Naive thymus-derived CD4-positive, alpha-beta T cell (primary cell): ENCODE measurements at regions of chr4 and their contacts with region 1.

Region 1: GRCh38 chr4:185203486-185204237 is at the start of gene CFAP97:
- DNase-seq: peak; percentile 78 to 90 (median 85)
- ATAC-seq: peak; percentile 89
- H3K4me3 ChIP-seq: peak within 1 kb of the TSS; percentile 64
- H3K4me3 Mint-ChIP-seq: peak within 1 kb of the TSS; percentile 87 to 99 (median 96)
- H3K27ac ChIP-seq: peak within 1 kb of the TSS; percentile 75
- H3K27ac Mint-ChIP-seq: peak within 1 kb of the TSS; percentile 95 to 99 (median 98)
- H3K4me1 ChIP-seq: peaks cover 22% of the 10 kb centered on the region in 2 donors
- H3K4me1 Mint-ChIP-seq: peaks cover 28 to 60% (median 53%) of the 10 kb centered on the region in 7 donors
- H3K27me3 ChIP-seq: no peaks in the 10 kb centered on the region
- H3K27me3 Mint-ChIP-seq: peaks cover 0 to 3% (median 0%) of the 10 kb centered on the region in 5 donors
- total RNA-seq, gene CFAP97: 23.6 to 46.5 (median 38.0) TPM

Region 2: DNA sequence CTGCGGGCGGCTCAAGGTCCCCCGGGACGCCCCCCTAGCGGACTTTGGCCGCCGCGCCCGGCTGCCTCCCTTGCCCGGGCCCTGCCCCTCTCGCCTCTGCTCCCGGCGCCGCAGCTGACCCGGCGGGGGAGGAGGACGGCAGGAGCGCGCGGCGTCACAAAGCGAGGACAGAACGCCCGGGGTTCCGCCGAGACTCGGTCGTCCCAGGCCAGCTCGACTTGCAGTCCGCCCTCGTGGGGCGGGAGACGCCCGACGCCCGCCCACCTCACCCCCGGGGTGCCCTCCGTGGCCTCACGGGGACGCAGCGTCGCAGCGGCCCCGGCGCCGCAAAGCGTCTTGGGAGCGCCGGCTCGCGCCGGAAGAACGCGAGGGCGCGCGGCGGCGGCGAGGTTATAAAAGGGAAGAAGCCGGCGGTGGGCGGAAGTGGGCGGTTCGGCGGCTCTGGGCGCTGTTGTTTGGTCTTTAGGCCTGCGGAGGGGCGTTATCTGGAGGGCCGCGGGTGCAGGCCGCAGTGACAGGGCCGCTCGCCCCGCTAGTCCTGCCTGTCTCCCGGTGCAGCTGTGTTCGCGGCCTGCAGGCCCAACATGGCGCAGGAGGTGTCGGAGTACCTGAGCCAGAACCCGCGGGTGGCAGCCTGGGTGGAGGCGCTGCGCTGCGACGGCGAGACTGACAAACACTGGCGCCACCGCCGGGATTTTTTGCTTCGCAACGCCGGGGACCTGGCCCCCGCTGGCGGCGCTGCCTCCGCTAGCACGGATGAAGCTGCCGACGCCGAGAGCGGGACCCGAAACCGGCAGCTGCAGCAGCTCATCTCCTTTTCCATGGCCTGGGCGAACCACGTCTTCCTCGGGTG is 1759.2 kb before region 1 on chr4 and contains the start of gene CDKN2AIP:
- CTCF ChIA-PET with region 1: no interaction called
- POLR2A ChIA-PET with region 1: interaction called, 3 read pairs
- intact Hi-C with region 1: loop called in 1 of 2 experiments (anchors 2 kb)
- DNase-seq: peak; percentile 92 to 97 (median 95)
- ATAC-seq: peak; percentile 93
- H3K4me3 ChIP-seq: peak within 1 kb of the TSS; percentile 81
- H3K4me3 Mint-ChIP-seq: peak within 1 kb of the TSS; percentile 94 to 99 (median 97)
- H3K27ac ChIP-seq: peak within 1 kb of the TSS; percentile 96
- H3K27ac Mint-ChIP-seq: peak within 1 kb of the TSS; percentile 97 to 98 (median 98)
- H3K4me1 ChIP-seq: peaks cover 30 to 33% of the 10 kb centered on the region in 2 donors
- H3K4me1 Mint-ChIP-seq: peaks cover 35 to 66% (median 51%) of the 10 kb centered on the region in 7 donors
- H3K27me3 ChIP-seq: no peaks in the 10 kb centered on the region
- H3K27me3 Mint-ChIP-seq: peaks cover 0 to 5% (median 0%) of the 10 kb centered on the region in 5 donors
- total RNA-seq, gene CDKN2AIP: 24.9 to 58.2 (median 44.4) TPM

Region 3: GRCh38 chr4:184825896-184826690 is 377.6 kb before region 1 on chr4 and contains the start of gene ACSL1:
- CTCF ChIA-PET with region 1: no interaction called
- POLR2A ChIA-PET with region 1: no interaction called
- intact Hi-C with region 1: loop called (anchors 2 to 5 kb)
- DNase-seq: peak; percentile 63 to 83 (median 75)
- ATAC-seq: peak; percentile 95
- H3K4me3 ChIP-seq: peak within 1 kb of the TSS; percentile 59
- H3K4me3 Mint-ChIP-seq: peak within 1 kb of the TSS; percentile 89 to 94 (median 91)
- H3K27ac ChIP-seq: peak within 1 kb of the TSS; percentile 73
- H3K27ac Mint-ChIP-seq: peak within 1 kb of the TSS; percentile 79 to 91 (median 90)
- H3K4me1 ChIP-seq: peaks cover 4 to 7% of the 10 kb centered on the region in 2 donors
- H3K4me1 Mint-ChIP-seq: peaks cover 21 to 46% (median 33%) of the 10 kb centered on the region in 7 donors
- H3K27me3 ChIP-seq: no peaks in the 10 kb centered on the region
- H3K27me3 Mint-ChIP-seq: peaks cover 0 to 25% (median 0%) of the 10 kb centered on the region in 5 donors
- total RNA-seq, gene ACSL1: 9.5 to 80.1 (median 20.4) TPM

Region 4: GRCh38 chr4:185151296-185151695 is 52.4 kb before region 1 on chr4:
- CTCF ChIA-PET with region 1: no interaction called
- POLR2A ChIA-PET with region 1: no interaction called
- intact Hi-C with region 1: no loop called
- DNase-seq: no peak
- ATAC-seq: no peak
- H3K4me3 ChIP-seq: no peak overlapping the region
- H3K4me3 Mint-ChIP-seq: no peak overlapping the region
- H3K27ac ChIP-seq: no peak overlapping the region
- H3K27ac Mint-ChIP-seq: no peak overlapping the region
- H3K4me1 ChIP-seq: peaks cover 0 to 4% of the 10 kb centered on the region in 2 donors
- H3K4me1 Mint-ChIP-seq: peaks cover 0 to 8% (median 0%) of the 10 kb centered on the region in 7 donors
- H3K27me3 ChIP-seq: no peaks in the 10 kb centered on the region
- H3K27me3 Mint-ChIP-seq: peaks cover 0 to 6% (median 0%) of the 10 kb centered on the region in 5 donors

Region 5: DNA sequence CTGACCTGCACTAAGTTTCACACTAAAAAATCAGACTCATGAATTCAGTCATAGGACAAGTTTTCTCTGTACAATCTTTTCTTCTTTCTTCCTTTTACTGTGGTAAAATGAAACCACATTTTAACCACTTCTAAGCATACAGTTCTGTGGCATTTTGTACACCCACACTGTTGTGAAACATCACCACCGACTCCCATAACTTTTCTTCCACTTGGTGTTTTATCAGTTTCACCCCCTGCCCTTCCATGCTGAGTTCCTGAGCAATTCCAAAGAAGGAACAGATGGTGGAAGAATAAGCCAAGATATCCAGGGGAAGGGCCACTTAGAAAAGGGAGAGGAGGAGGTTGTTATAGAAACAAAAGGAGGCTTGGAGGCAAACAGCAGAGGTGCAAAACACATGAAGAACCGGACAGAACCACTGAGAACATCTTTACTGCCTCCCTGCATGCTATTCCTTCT is 38.0 kb before region 1 on chr4:
- CTCF ChIA-PET with region 1: no interaction called
- POLR2A ChIA-PET with region 1: interaction called, 3 read pairs
- intact Hi-C with region 1: loop called (anchors 2 to 5 kb)
- DNase-seq: peak in 7 of 9 donors; percentile 29 to 77 (median 71)
- ATAC-seq: peak; percentile 81
- H3K4me3 ChIP-seq: peak overlapping the region; percentile 0
- H3K4me3 Mint-ChIP-seq: peak overlapping the region; percentile 40 to 79 (median 66)
- H3K27ac ChIP-seq: no peak overlapping the region
- H3K27ac Mint-ChIP-seq: peak overlapping the region in 7 of 9 donors; percentile 21 to 82 (median 48)
- H3K4me1 ChIP-seq: peaks cover 14% of the 10 kb centered on the region in 2 donors
- H3K4me1 Mint-ChIP-seq: peaks cover 13 to 26% (median 20%) of the 10 kb centered on the region in 7 donors
- H3K27me3 ChIP-seq: no peaks in the 10 kb centered on the region
- H3K27me3 Mint-ChIP-seq: peaks cover 0 to 18% (median 0%) of the 10 kb centered on the region in 5 donors

Region 6: GRCh38 chr4:185256446-185256845 is 52.8 kb after region 1 on chr4:
- CTCF ChIA-PET with region 1: no interaction called
- POLR2A ChIA-PET with region 1: interaction called, 7 read pairs
- intact Hi-C with region 1: loop called in 1 of 2 experiments (anchors 1 kb)
- DNase-seq: no peak
- ATAC-seq: no peak
- H3K4me3 ChIP-seq: peak overlapping the region; percentile 39
- H3K4me3 Mint-ChIP-seq: peak overlapping the region in 6 of 10 donors; percentile 36 to 83 (median 78)
- H3K27ac ChIP-seq: peak overlapping the region; percentile 2
- H3K27ac Mint-ChIP-seq: peak overlapping the region in 5 of 9 donors; percentile 83 to 92 (median 87)
- H3K4me1 ChIP-seq: peaks cover 22 to 23% of the 10 kb centered on the region in 2 donors
- H3K4me1 Mint-ChIP-seq: peaks cover 10 to 70% (median 43%) of the 10 kb centered on the region in 7 donors
- H3K27me3 ChIP-seq: no peaks in the 10 kb centered on the region
- H3K27me3 Mint-ChIP-seq: no peaks in the 10 kb centered on the region

Region 7: DNA sequence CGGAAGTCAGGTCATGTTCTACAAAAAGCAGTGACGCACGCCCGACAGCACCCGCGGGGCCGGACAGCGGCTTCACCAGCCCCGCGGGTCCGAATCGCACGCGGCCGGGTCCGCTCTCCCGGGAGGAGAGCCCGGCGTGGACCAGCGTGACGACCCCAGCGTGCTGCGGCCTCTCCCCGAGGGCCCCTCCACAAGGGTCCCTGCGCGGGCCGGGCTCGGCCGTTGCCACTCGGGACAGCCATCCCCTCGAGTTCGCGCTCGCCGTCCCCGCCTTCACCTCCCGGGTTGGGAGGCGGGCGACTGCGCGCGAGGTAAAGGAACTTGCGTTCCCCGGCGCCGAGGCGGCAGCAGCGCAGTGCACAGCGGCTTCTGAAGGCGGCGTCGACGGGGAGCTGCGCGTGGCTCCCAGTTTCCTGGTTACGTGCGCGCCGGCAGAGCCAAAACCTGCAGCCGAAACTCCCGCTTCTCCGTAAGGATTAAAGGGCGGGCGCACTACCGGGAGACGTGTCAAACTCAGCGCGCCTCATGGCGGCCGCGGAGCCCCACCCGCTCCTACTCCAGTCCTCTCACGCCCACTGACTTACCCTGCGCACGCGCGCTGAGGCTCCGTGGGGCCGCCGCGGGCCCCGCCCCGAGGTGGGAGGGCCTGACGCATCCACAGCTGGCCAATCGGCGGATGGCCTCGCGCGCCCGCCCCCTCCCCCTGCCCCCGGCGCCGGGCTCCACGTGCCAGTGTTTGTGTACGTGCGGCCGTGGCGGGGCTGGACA is 192.5 kb after region 1 on chr4:
- CTCF ChIA-PET with region 1: no interaction called
- POLR2A ChIA-PET with region 1: interaction called, 19 read pairs
- intact Hi-C with region 1: loop called (anchors 1 kb)
- DNase-seq: peak; percentile 93 to 100 (median 97)
- ATAC-seq: peak; percentile 97
- H3K4me3 ChIP-seq: peak overlapping the region; percentile 69
- H3K4me3 Mint-ChIP-seq: peak overlapping the region; percentile 82 to 100 (median 97)
- H3K27ac ChIP-seq: peak overlapping the region; percentile 97
- H3K27ac Mint-ChIP-seq: peak overlapping the region; percentile 90 to 100 (median 99)
- H3K4me1 ChIP-seq: peaks cover 12 to 15% of the 10 kb centered on the region in 2 donors
- H3K4me1 Mint-ChIP-seq: peaks cover 14 to 57% (median 27%) of the 10 kb centered on the region in 7 donors
- H3K27me3 ChIP-seq: no peaks in the 10 kb centered on the region
- H3K27me3 Mint-ChIP-seq: no peaks in the 10 kb centered on the region

Region 8: GRCh38 chr4:185471235-185472102 is 267.8 kb after region 1 on chr4 and contains the start of gene CCDC110:
- CTCF ChIA-PET with region 1: no interaction called
- POLR2A ChIA-PET with region 1: no interaction called
- intact Hi-C with region 1: loop called (anchors 1 kb)
- DNase-seq: peak; percentile 72 to 89 (median 86)
- ATAC-seq: peak; percentile 99
- H3K4me3 ChIP-seq: peak within 1 kb of the TSS; percentile 61
- H3K4me3 Mint-ChIP-seq: peak within 1 kb of the TSS; percentile 87 to 98 (median 92)
- H3K27ac ChIP-seq: peak within 1 kb of the TSS; percentile 65
- H3K27ac Mint-ChIP-seq: peak within 1 kb of the TSS; percentile 5 to 90 (median 86)
- H3K4me1 ChIP-seq: peaks cover 0 to 3% of the 10 kb centered on the region in 2 donors
- H3K4me1 Mint-ChIP-seq: peaks cover 5 to 18% (median 9%) of the 10 kb centered on the region in 7 donors
- H3K27me3 ChIP-seq: no peaks in the 10 kb centered on the region
- H3K27me3 Mint-ChIP-seq: peaks cover 0 to 52% (median 6%) of the 10 kb centered on the region in 5 donors
- total RNA-seq, gene CCDC110: 0.42 to 1.8 (median 0.76) TPM in 4 of 5 experiments, not detected in the other